ENCODE measurements at regions of chr2 and their contacts with region 1.

Region 1: DNA sequence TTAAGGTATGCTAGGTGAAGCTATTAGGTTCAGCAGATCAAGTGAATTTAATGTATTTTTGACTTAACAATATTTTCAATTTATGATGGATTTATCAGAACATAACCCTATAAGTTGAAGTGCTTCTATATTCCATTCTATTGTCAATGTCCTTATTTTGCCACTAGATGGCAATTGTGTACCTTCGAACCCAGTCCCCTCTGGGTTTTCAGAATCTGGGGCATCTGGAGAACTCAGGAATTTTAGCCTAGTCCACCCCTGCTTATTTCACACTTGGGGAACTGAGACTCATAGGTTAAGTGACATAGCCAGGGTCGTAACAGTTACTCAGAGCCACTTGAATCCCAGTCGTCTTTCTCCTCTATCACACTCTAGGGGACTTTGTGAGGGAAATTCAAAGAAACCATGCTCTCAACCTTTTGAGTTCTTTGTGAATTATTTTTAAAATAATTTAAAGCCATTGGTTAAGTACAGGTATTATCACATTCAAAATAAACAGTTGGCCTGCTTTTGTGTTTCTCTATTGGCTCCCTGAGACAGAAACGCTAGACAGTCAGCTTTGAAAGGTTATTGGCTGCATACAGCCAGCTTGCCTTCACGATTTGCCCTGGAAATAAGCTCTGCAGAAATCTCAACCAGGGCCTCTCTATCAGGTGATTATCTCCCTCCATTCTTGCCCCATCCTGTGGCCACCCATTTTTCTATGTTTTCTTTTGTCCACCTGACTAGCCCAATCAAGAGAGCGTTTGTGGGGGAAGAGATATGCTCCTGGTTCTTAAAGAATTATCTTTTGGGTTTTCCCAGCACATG is 145.0 kb downstream of the TTC27 start:
- DNase-seq: peak; percentile 21
- ATAC-seq: peak; percentile 78
- H3K4me3 ChIP-seq: no peak overlapping the region
- H3K27ac ChIP-seq: no peak overlapping the region
- H3K4me1 ChIP-seq: no peaks in the 10 kb centered on the region
- H3K27me3 ChIP-seq: no peaks in the 10 kb centered on the region
- CTCF ChIP-seq: peak; percentile 52 to 90 (median 85)
- POLR2A ChIP-seq: no peak
- RAD21 ChIP-seq: peak; percentile 93

Region 2: DNA sequence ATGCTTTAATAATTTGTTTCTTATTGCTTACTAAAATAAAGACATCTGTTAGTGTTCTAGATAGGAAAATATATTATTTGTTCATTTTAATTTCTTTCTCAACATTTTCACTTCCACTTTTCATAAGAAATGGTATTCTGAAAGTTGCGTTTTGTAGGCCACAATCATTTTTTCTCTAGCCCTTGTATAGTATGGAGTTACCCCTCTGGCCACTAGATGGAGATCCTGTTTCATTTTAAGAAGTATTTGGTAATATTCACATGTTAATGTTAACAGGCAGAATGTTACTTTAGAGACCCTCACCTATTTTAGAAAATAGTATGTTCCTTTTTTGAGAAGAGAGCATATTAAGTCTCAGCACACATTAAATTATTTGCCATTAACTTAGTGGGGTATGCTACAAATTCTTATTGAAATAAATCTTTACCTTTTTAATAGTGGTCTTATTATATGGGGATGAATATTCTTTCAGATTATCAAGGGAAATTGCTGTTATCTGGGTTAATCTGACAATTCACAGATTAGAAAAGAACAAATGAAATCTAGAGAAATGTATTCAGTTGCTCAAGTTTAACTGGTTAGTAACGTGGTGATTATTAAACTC is 218.9 kb before region 1 on chr2:
- CTCF ChIA-PET with region 1: no interaction called
- POLR2A ChIA-PET with region 1: no interaction called
- RAD21 ChIA-PET with region 1: no interaction called
- intact Hi-C with region 1: loop called (anchors 10 kb)
- DNase-seq: peak; percentile 12
- ATAC-seq: peak; percentile 88
- H3K4me3 ChIP-seq: no peak overlapping the region
- H3K27ac ChIP-seq: no peak overlapping the region
- H3K4me1 ChIP-seq: no peaks in the 10 kb centered on the region
- H3K27me3 ChIP-seq: no peaks in the 10 kb centered on the region
- CTCF ChIP-seq: peak; percentile 54 to 77 (median 74); a peak in 5 of 6 replicates
- POLR2A ChIP-seq: no peak
- RAD21 ChIP-seq: peak; percentile 66

Region 3: GRCh38 chr2:32946314-32947075 is 173.7 kb after region 1 on chr2 and contains the start of gene LTBP1:
- CTCF ChIA-PET with region 1: no interaction called
- POLR2A ChIA-PET with region 1: no interaction called
- RAD21 ChIA-PET with region 1: no interaction called
- intact Hi-C with region 1: loop called (anchors 1 kb)
- DNase-seq: peak; percentile 45
- ATAC-seq: peak; percentile 86
- H3K4me3 ChIP-seq: peak within 1 kb of the TSS; percentile 47 to 63
- H3K27ac ChIP-seq: peak within 1 kb of the TSS; percentile 44; the same call in 1 of the 2 replicates
- H3K4me1 ChIP-seq: peaks cover 0 to 16% of the 10 kb centered on the region in 2 experiments; a peak in 2 of 4 replicates
- H3K27me3 ChIP-seq: no peaks in the 10 kb centered on the region
- CTCF ChIP-seq: peak; percentile 68 to 88 (median 87)
- POLR2A ChIP-seq: no peak
- RAD21 ChIP-seq: peak; percentile 73
- total RNA-seq, gene LTBP1: 5.1 TPM

Region 4: GRCh38 chr2:33086400-33087015 is 313.7 kb after region 1 on chr2:
- CTCF ChIA-PET with region 1: no interaction called
- POLR2A ChIA-PET with region 1: no interaction called
- RAD21 ChIA-PET with region 1: no interaction called
- intact Hi-C with region 1: loop called (anchors 5 kb)
- DNase-seq: no peak
- ATAC-seq: no peak
- H3K4me3 ChIP-seq: no peak overlapping the region
- H3K27ac ChIP-seq: no peak overlapping the region
- H3K4me1 ChIP-seq: peaks cover 0 to 5% of the 10 kb centered on the region in 2 experiments; a peak in 3 of 4 replicates
- H3K27me3 ChIP-seq: no peaks in the 10 kb centered on the region
- CTCF ChIP-seq: peak in 1 of 3 experiments; percentile 20; a peak in 1 of 6 replicates
- POLR2A ChIP-seq: no peak
- RAD21 ChIP-seq: peak; percentile 36; the same call in 1 of the 2 replicates

Region 5: GRCh38 chr2:33317369-33318007 is 544.6 kb after region 1 on chr2:
- CTCF ChIA-PET with region 1: no interaction called
- POLR2A ChIA-PET with region 1: no interaction called
- RAD21 ChIA-PET with region 1: no interaction called
- intact Hi-C with region 1: no loop called
- DNase-seq: no peak
- ATAC-seq: no peak
- H3K4me3 ChIP-seq: no peak overlapping the region
- H3K27ac ChIP-seq: no peak overlapping the region
- H3K4me1 ChIP-seq: no peaks in the 10 kb centered on the region
- H3K27me3 ChIP-seq: no peaks in the 10 kb centered on the region
- CTCF ChIP-seq: no peak
- POLR2A ChIP-seq: no peak
- RAD21 ChIP-seq: no peak

Region 6: DNA sequence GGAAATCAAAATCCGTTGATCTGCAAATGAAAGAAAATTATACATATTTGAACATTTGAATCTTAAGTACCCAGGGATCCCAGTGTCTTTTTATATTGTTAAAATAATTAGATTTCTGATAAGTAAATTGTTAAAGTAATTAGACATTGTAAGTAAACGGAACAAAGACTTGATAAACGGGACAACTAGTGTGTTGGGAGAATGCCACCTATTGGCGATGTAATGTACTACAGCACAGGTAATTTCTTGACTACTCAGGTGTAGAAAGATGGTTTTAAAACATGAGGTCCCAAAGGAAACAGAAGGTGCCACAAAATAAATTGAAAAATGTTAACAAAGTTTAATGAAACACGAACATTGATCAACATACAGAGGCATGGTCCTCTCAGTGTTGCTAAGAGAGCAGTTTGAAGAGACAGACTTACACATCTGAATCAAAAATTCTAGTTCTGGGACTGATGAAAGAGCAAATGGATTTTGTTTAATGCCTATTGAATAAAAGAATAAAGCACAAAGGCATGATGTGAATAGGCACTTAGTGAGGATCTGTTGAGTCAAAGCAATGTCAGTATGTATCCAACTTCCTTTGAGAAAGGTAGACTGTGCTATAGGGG is 600.2 kb after region 1 on chr2:
- CTCF ChIA-PET with region 1: interaction called, 4 read pairs
- POLR2A ChIA-PET with region 1: no interaction called
- RAD21 ChIA-PET with region 1: no interaction called
- intact Hi-C with region 1: loop called (anchors 2 kb)
- DNase-seq: peak; percentile 47
- ATAC-seq: peak; percentile 79
- H3K4me3 ChIP-seq: no peak overlapping the region
- H3K27ac ChIP-seq: no peak overlapping the region
- H3K4me1 ChIP-seq: no peaks in the 10 kb centered on the region
- H3K27me3 ChIP-seq: no peaks in the 10 kb centered on the region
- CTCF ChIP-seq: peak; percentile 75 to 78 (median 77); a peak in 5 of 6 replicates
- POLR2A ChIP-seq: no peak
- RAD21 ChIP-seq: peak; percentile 79

Region 7: GRCh38 chr2:33395655-33396249 is 622.9 kb after region 1 on chr2:
- CTCF ChIA-PET with region 1: interaction called, 3 read pairs
- POLR2A ChIA-PET with region 1: no interaction called
- RAD21 ChIA-PET with region 1: no interaction called
- intact Hi-C with region 1: loop called (anchors 5 kb)
- DNase-seq: peak; percentile 28
- ATAC-seq: peak; percentile 75
- H3K4me3 ChIP-seq: no peak overlapping the region
- H3K27ac ChIP-seq: no peak overlapping the region
- H3K4me1 ChIP-seq: no peaks in the 10 kb centered on the region
- H3K27me3 ChIP-seq: no peaks in the 10 kb centered on the region
- CTCF ChIP-seq: peak; percentile 29 to 77 (median 70); a peak in 5 of 6 replicates
- POLR2A ChIP-seq: no peak
- RAD21 ChIP-seq: peak; percentile 62

Measured in HCT116 (cell line).